Right ventricle myocardium inferior (tissue), 1 donor: ENCODE measurements at regions of chr18 and their contacts with region 1.

Region 1: DNA sequence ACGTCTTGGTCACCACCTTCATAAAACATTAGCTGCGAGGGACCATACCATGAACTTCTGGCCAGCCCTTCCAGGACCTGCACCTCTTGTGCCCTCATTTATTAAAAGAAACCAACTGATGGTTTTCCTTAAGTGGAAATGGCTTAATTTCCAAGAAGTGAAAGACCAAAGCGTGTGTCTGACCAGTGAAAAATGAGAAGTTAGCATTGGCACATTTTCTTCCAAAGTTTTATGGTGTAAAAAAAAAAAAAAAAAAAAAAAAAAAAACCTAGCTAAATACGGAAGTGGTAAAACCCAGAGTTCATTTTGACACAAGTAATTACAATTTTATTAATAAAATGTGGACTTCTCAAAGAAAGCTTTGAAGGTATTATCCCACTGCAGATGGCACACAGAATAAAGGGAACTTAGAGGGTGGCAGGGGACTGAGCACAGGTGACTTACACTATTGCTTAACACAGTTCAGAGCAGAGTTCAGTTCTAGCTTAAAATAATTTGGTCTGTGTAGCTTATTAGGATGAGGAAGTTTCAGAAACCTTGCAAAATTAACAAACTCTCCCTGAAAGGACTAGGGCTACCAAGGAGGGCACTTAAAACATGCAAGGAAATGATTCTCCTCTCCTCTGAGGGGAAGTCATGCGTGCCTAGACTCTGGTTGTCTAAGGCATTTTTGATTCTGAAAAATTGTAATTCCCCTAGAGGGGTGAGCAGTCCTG is 42.2 kb upstream of the EPG5 start:
- DNase-seq: no peak
- ATAC-seq: peak; percentile 59

Region 2: GRCh38 chr18:45874491-45875184 is 134.6 kb before region 1 on chr18:
- intact Hi-C with region 1: no loop called
- DNase-seq: no peak
- ATAC-seq: no peak

Region 3: GRCh38 chr18:45910405-45911023 is 98.8 kb before region 1 on chr18:
- intact Hi-C with region 1: no loop called
- DNase-seq: no peak
- ATAC-seq: no peak

Region 4: GRCh38 chr18:45995461-45995860 is 13.8 kb before region 1 on chr18:
- intact Hi-C with region 1: loop called (anchors 1 kb)
- DNase-seq: no peak
- ATAC-seq: no peak

Region 5: GRCh38 chr18:46051731-46052461 is 42.6 kb after region 1 on chr18:
- intact Hi-C with region 1: loop called (anchors 2 kb)
- DNase-seq: no peak
- ATAC-seq: no peak

Region 6: GRCh38 chr18:46555724-46556123 is 546.4 kb after region 1 on chr18:
- intact Hi-C with region 1: no loop called
- DNase-seq: no peak
- ATAC-seq: no peak